Heart right ventricle (tissue), 16 donors: ENCODE measurements at regions of chr11 and their contacts with region 1.

Region 1: DNA sequence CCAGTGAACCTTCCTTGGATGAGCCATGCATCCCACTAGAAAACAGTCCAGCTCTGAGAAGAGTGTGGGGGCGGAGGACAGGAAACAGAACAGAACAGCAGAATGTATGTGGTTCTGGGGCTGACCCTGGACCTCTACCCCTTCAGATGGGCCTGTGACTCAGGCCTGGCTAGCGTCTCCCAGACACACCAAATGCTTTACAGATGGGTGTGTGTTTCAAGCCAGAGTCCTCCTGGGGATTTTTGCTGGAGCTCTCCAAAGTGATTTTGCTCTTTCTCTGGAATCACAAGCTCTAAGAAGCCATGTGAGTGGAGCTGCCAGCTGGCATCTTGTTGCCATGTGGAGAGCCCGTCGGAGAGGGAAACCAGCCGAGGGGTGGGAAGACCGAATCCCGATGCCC is 13.2 kb upstream of the C1QTNF4 start:
- DNase-seq: peak; percentile 35 to 40
- ATAC-seq: peak; percentile 52 to 70 (median 68)
- H3K4me3 ChIP-seq: no peak overlapping the region
- H3K27ac ChIP-seq: peak overlapping the region in 6 of 10 donors; percentile 20 to 66 (median 36)
- H3K4me1 ChIP-seq: peaks cover 5 to 41% (median 29%) of the 10 kb centered on the region in 9 donors
- H3K27me3 ChIP-seq: no peaks in the 10 kb centered on the region
- CTCF ChIP-seq: no peak

Region 2: GRCh38 chr11:47560436-47560835 is 46.9 kb before region 1 on chr11:
- intact Hi-C with region 1: no loop called
- DNase-seq: no peak
- ATAC-seq: no peak
- H3K4me3 ChIP-seq: no peak overlapping the region
- H3K27ac ChIP-seq: no peak overlapping the region
- H3K4me1 ChIP-seq: peaks cover 5 to 10% (median 8%) of the 10 kb centered on the region in 9 donors
- H3K27me3 ChIP-seq: no peaks in the 10 kb centered on the region
- CTCF ChIP-seq: no peak

Region 3: DNA sequence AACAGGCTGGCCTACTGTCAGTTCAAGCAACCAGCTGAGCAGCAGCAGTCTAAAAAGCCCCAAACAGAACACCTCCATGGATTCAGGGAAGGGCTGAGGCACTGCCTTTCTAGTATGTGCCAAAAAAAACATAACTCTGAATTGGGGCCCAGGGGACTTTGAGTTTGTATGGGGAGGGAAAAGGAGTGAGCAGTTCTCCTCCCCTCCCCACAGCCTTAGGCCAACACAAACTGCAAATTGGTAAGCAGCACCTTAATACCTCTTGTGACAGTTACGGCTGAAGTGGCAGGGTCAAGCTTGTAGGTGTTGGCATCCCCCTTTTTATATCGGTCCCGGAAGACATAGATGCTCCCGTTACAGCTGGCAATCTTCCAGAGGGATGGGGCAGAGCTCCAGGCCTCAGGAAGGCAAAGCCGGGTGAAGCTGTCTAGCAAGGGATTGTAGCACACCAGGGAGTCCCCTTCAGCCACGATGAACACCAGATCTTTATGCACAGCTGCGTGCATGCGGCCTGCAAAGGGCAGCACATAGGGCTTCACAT is 34.6 kb before region 1 on chr11:
- intact Hi-C with region 1: loop called in 1 of 10 experiments (anchors 5 kb)
- DNase-seq: no peak
- ATAC-seq: peak in 7 of 8 donors; percentile 10 to 66 (median 29)
- H3K4me3 ChIP-seq: no peak overlapping the region
- H3K27ac ChIP-seq: peak overlapping the region in 6 of 10 donors; percentile 17 to 73 (median 40)
- H3K4me1 ChIP-seq: peaks cover 16 to 51% (median 35%) of the 10 kb centered on the region in 9 donors
- H3K27me3 ChIP-seq: no peaks in the 10 kb centered on the region
- CTCF ChIP-seq: no peak